BJ (cell line): ENCODE measurements at regions of chr7 and their contacts with region 1.

Region 1: GRCh38 chr7:24715661-24716479 is 41.4 kb downstream of the GSDME start:
- DNase-seq: no peak
- H3K4me3 ChIP-seq: no peak overlapping the region
- H3K27me3 ChIP-seq: no peaks in the 10 kb centered on the region
- CTCF ChIP-seq: peak; percentile 68

Region 2: DNA sequence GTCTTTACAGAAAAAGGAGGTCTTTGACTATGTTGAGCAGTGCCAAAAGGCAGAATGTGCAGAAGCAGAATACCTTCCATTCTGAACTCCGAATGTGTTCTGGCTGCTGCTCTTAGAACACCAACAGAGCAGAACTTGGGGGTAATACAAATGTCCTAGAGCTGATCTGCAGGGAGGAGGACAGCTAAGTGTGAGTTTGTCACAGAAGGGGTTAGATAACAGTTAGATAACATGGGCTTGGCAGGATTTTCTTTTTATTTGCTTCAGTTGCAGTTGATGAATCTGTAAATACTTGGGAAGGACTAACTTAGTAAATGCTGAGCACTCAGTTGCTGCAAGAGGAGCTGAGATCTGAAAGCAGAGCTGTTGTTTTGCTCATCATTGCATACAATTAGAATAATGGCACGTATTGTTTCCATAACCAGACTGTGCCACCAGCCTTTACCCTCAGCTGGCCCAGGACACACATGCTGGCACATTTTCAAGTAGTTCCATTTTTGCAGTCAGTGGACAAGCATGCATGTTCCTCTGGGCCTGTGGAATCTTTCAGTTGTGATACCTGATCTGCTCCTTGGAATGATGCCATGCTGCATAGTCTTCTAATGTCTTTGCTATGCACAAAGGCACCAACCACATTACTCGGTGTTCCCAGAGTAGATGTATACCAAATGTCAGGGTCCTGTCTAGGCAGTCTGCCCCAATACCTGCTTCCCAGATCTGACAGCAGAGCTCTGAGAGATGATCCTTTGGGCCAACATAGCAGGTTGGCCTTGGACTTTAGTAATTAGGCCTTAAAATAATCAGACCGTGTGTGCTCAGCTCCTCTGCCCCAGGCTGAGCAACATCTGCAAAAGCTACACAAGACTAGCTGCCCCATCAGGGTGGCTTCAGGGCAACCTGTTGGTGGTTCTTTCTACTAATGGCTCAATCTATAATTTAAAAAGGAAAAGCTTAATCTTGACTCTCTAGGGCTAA is 14.3 kb before region 1 on chr7:
- CTCF ChIA-PET with region 1: interaction called, 15 read pairs
- POLR2A ChIA-PET with region 1: no interaction called
- DNase-seq: peak; percentile 45
- H3K4me3 ChIP-seq: no peak overlapping the region
- H3K27me3 ChIP-seq: no peaks in the 10 kb centered on the region
- CTCF ChIP-seq: no peak

Region 3: DNA sequence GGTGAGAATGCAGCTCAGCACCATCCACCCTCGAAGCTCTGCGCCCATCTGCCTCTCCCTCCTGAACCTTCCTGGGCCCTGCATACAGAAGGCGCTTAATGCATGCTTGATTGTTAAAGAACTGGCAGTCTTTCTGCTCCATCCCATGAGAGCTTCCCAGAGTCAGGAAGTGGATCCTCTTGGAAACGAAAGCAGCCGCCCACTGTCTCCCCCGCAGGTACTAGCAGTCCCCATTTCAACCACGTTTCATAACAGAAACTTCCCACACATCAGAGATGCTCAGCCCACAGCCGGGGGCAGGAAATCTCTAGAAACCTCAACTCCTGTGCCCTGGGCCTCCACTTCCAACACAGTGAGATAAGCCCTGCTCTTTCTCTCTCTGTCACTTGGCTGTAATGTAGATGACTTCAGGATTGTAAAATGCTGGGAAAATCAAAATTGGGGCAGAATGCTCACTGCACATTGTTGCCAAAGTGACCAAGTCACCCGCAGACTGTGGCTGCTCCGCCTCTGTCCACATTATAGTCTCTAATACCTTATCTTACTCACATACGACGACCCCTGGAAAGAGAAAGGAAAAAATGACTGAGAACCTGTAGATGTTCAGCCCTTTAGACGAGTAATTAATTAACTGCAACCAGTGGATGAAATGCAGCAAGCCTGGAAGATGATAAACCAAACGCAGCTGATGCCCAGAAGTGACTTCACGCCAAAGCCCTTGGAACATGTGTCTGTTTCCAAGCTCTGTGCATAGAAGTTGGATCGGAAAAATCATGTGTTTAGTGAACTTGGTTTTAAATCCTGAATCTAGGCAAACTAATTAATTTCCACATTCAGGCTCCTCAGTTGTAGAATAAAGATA is 12.9 kb after region 1 on chr7:
- CTCF ChIA-PET with region 1: interaction called, 12 read pairs
- POLR2A ChIA-PET with region 1: no interaction called
- DNase-seq: no peak
- H3K4me3 ChIP-seq: no peak overlapping the region
- H3K27me3 ChIP-seq: no peaks in the 10 kb centered on the region
- CTCF ChIP-seq: no peak